ENCODE measurements at regions of chr20 and their contacts with region 1.

Region 1: DNA sequence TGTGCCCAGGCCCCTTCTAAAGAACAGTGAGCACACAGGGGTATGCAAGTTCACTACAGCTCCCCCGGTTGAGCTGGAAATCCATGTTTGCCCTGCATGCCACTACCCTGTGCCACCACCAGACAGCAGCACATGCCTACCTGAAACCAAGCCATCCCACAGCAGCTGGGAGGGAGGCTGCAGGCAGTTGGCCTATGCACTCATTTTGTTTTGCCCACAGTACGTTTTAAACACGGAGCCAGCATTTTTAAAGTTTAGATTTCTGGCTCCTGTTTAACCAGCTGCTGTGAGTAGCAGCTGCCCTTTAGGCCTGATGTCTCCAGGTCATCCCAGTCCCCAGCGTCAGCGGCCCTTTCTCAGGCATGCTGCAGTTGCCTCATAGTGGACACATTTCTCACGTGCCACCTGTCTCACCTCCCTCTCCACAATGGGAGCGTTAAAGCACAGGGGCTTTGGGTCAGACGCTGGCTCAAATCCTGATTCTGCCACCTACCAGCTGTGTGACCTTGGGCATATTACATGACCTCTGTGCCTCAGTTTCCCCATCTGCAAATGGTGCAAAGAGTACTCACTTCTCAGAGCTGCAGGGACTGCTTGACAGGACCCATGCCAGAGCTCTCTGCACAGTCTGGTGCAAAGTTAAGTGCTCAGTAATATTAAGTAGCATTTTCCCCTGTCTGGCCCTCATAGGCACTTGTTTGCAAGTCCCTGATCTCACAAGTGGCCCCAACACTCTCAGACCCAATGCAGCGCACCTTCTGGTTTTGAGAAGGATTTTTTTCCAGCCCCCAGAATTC is 8.1 kb upstream of the UBE2V1 start:
- DNase-seq: peak; percentile 46 to 83 (median 62)
- ATAC-seq: peak; percentile 74 to 85
- H3K4me3 Mint-ChIP-seq: no peak overlapping the region
- H3K27ac Mint-ChIP-seq: peak overlapping the region in 3 of 10 donors; percentile 40 to 70 (median 44)
- H3K4me1 Mint-ChIP-seq: peaks cover 4 to 13% (median 9%) of the 10 kb centered on the region in 4 donors
- H3K27me3 Mint-ChIP-seq: no peaks in the 10 kb centered on the region

Region 2: DNA sequence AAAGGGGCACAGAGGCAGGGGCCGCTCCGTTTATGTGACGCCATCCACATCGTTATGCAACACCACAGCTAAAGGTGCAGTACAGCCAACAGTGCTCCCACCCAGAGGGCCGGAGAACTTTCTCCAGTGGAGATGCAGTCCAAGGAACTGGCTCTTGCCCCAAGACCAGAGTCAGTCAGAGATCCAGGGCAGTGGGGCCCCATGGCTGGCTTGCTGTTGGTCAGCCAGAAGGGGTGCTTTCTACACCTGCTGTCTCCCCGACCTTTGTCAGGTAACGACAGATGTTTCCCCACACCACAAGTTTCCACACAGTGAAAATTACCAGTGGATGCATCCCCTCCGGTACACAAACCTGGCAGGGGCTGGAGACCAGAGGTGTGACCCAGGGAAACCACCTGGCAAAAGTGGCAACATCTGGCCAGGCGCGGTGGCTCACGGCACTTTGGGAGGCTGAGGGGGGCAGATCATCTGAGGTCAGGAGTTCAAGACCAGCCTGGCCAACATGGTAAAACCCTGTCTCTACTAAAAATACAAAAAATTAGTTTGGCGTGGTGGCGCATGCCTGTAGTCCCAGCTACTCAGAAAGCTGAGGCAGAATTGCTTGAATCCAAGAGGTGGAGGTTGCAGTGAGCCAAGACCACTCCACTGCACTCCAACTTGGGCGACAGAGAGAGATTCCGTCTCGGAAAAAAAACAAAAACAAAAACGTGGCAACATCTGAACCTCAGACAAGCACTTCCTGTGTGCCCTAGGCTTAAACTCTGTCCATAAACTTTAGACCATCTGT is 43.1 kb before region 1 on chr20:
- POLR2A ChIA-PET with region 1: no interaction called
- DNase-seq: no peak
- ATAC-seq: no peak
- H3K4me3 Mint-ChIP-seq: no peak overlapping the region
- H3K27ac Mint-ChIP-seq: peak overlapping the region in 6 of 10 donors; percentile 25 to 72 (median 54)
- H3K4me1 Mint-ChIP-seq: peaks cover 0 to 7% (median 5%) of the 10 kb centered on the region in 4 donors
- H3K27me3 Mint-ChIP-seq: no peaks in the 10 kb centered on the region

Region 3: GRCh38 chr20:50169329-50169831 is 48.3 kb after region 1 on chr20:
- POLR2A ChIA-PET with region 1: interaction called, 27 read pairs
- DNase-seq: peak; percentile 67 to 87 (median 78)
- ATAC-seq: peak; percentile 80 to 84
- H3K4me3 Mint-ChIP-seq: no peak overlapping the region
- H3K27ac Mint-ChIP-seq: no peak overlapping the region
- H3K4me1 Mint-ChIP-seq: peaks cover 12 to 21% (median 17%) of the 10 kb centered on the region in 4 donors
- H3K27me3 Mint-ChIP-seq: peaks cover 5 to 28% (median 16%) of the 10 kb centered on the region in 5 donors